ENCODE measurements at regions of chr9 and their contacts with region 1.

Region 1: GRCh38 chr9:34079181-34079580 is 30.5 kb upstream of the UBAP2 start:
- DNase-seq: no peak
- H3K4me3 ChIP-seq: no peak overlapping the region
- H3K4me3 Mint-ChIP-seq: no peak overlapping the region
- H3K27ac ChIP-seq: no peak overlapping the region
- H3K27ac Mint-ChIP-seq: no peak overlapping the region
- H3K4me1 ChIP-seq: no peaks in the 10 kb centered on the region
- H3K4me1 Mint-ChIP-seq: peaks cover 0 to 3% (median 2%) of the 10 kb centered on the region in 3 donors
- H3K27me3 ChIP-seq: no peaks in the 10 kb centered on the region
- H3K27me3 Mint-ChIP-seq: no peaks in the 10 kb centered on the region

Region 2: DNA sequence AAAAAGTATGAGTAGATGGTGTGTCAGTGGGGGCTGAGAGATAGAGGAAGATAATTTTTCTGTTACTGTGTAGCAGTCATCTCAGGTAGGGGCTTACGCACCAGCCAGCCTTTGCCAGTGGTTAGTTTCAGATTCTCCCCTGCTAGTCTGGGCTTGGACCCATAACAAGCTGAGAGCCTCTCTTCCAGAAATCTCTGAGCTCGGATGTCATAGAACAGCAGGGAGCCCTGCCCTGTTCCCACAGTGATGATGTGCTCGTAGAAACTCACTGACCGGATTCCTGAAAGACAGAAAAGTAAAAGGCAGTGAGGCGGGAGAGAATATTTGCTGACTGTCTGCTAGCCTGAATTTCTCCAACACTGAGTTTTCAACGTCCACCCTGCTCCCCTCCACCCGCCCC is 10.1 kb after region 1 on chr9:
- CTCF ChIA-PET with region 1: interaction called, 16 read pairs
- POLR2A ChIA-PET with region 1: interaction called, 3 read pairs
- DNase-seq: no peak
- H3K4me3 ChIP-seq: no peak overlapping the region
- H3K4me3 Mint-ChIP-seq: no peak overlapping the region
- H3K27ac ChIP-seq: no peak overlapping the region
- H3K27ac Mint-ChIP-seq: peak overlapping the region in 4 of 8 donors; percentile 23 to 36 (median 32)
- H3K4me1 ChIP-seq: no peaks in the 10 kb centered on the region
- H3K4me1 Mint-ChIP-seq: peaks cover 0 to 5% (median 3%) of the 10 kb centered on the region in 3 donors
- H3K27me3 ChIP-seq: no peaks in the 10 kb centered on the region
- H3K27me3 Mint-ChIP-seq: no peaks in the 10 kb centered on the region

Measured in CD8-positive, alpha-beta memory T cell (primary cell).